T-cell (primary cell): ENCODE measurements at regions of chr4 and their contacts with region 1.

Region 1: GRCh38 chr4:147160908-147161513 is 215.3 kb upstream of the TTC29 start:
- DNase-seq: peak in 1 of 35 experiments; percentile 18
- ATAC-seq: no peak
- H3K4me3 ChIP-seq: no peak overlapping the region
- H3K4me3 Mint-ChIP-seq: no peak overlapping the region
- H3K27ac ChIP-seq: no peak overlapping the region
- H3K27ac Mint-ChIP-seq: no peak overlapping the region
- H3K4me1 ChIP-seq: no peaks in the 10 kb centered on the region
- H3K4me1 Mint-ChIP-seq: peaks cover 0 to 2% (median 1%) of the 10 kb centered on the region in 3 donors
- H3K27me3 ChIP-seq: peaks cover 6 to 13% of the 10 kb centered on the region in 2 experiments
- H3K27me3 Mint-ChIP-seq: peaks cover 18 to 38% of the 10 kb centered on the region in 2 donors

Region 2: GRCh38 chr4:147182041-147182440 is 21.0 kb after region 1 on chr4:
- CTCF ChIA-PET with region 1: interaction called in 1 of 2 experiments, 18 read pairs
- POLR2A ChIA-PET with region 1: no interaction called
- DNase-seq: no peak
- ATAC-seq: no peak
- H3K4me3 ChIP-seq: no peak overlapping the region
- H3K4me3 Mint-ChIP-seq: no peak overlapping the region
- H3K27ac ChIP-seq: no peak overlapping the region
- H3K27ac Mint-ChIP-seq: no peak overlapping the region
- H3K4me1 ChIP-seq: no peaks in the 10 kb centered on the region
- H3K4me1 Mint-ChIP-seq: no peaks in the 10 kb centered on the region
- H3K27me3 ChIP-seq: peaks cover 0 to 4% of the 10 kb centered on the region in 2 experiments
- H3K27me3 Mint-ChIP-seq: peaks cover 5 to 6% of the 10 kb centered on the region in 2 donors